Panc1 (cell line): ENCODE measurements at regions of chr1 and their contacts with region 1.

Region 1: GRCh38 chr1:147717063-147717565 is 43.3 kb downstream of the GJA5 start:
- DNase-seq: no peak
- ATAC-seq: peak; percentile 90
- H3K4me3 ChIP-seq: no peak overlapping the region
- H3K27ac ChIP-seq: no peak overlapping the region
- H3K4me1 ChIP-seq: no peaks in the 10 kb centered on the region; the same call in 1 of the 2 replicates
- H3K27me3 ChIP-seq: no peaks in the 10 kb centered on the region; the same call in 1 of the 2 replicates
- CTCF ChIP-seq: no peak

Region 2: DNA sequence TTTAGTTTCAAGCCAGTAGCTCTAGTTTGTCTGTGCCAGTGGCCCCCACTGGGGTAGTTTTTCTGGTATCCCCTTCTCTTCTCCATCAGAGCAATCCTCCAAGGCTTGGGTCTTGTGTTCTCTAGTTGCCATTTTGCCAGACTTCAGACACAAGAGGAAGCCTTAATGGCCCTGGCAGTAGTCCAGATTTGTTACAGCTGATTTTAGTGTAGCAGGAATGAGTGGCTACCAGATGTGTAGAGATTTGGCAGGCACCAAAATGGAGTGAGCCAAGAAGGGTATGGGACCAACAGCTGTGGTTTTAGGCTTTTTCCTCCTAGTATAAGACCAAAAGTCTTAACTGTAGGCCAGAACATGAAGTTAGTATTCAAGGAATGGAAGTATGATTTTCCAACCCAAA is 103.6 kb before region 1 on chr1:
- CTCF ChIA-PET with region 1: no interaction called
- POLR2A ChIA-PET with region 1: no interaction called
- in situ Hi-C with region 1: no loop called
- intact Hi-C with region 1: no loop called
- DNase-seq: no peak
- ATAC-seq: no peak
- H3K4me3 ChIP-seq: no peak overlapping the region
- H3K27ac ChIP-seq: no peak overlapping the region
- H3K4me1 ChIP-seq: no peaks in the 10 kb centered on the region
- H3K27me3 ChIP-seq: no peaks in the 10 kb centered on the region
- CTCF ChIP-seq: no peak

Region 3: GRCh38 chr1:147640553-147641165 is 76.5 kb before region 1 on chr1:
- CTCF ChIA-PET with region 1: no interaction called
- POLR2A ChIA-PET with region 1: no interaction called
- in situ Hi-C with region 1: no loop called
- intact Hi-C with region 1: no loop called
- DNase-seq: peak; percentile 32
- ATAC-seq: peak; percentile 96
- H3K4me3 ChIP-seq: no peak overlapping the region
- H3K27ac ChIP-seq: no peak overlapping the region
- H3K4me1 ChIP-seq: no peaks in the 10 kb centered on the region
- H3K27me3 ChIP-seq: no peaks in the 10 kb centered on the region
- CTCF ChIP-seq: peak; percentile 92

Region 4: DNA sequence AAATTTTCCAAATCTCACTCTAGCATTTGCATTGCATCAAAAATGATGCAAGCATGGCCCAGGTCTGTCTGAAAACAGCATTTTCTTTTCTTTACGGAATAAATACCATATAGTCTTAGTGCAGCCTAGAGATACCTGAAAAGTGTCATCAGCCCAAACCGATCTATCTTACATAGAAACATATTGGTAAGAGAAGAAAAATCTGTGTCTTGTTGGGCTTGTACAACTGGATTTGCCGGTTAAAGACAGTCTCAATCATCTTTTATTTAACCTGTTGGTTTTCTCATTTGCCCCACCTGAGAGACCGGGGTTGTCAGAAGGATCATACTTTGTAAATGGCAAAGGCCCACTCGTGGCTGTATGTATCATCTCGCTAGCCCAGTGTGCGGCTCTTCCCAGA is 62.6 kb before region 1 on chr1:
- CTCF ChIA-PET with region 1: no interaction called
- POLR2A ChIA-PET with region 1: no interaction called
- in situ Hi-C with region 1: no loop called
- intact Hi-C with region 1: no loop called
- DNase-seq: no peak
- ATAC-seq: no peak
- H3K4me3 ChIP-seq: no peak overlapping the region
- H3K27ac ChIP-seq: no peak overlapping the region
- H3K4me1 ChIP-seq: no peaks in the 10 kb centered on the region
- H3K27me3 ChIP-seq: no peaks in the 10 kb centered on the region
- CTCF ChIP-seq: no peak

Region 5: GRCh38 chr1:147700042-147701006 is 16.8 kb before region 1 on chr1:
- CTCF ChIA-PET with region 1: no interaction called
- POLR2A ChIA-PET with region 1: no interaction called
- in situ Hi-C with region 1: no loop called
- intact Hi-C with region 1: loop called (anchors 2 kb)
- DNase-seq: no peak
- ATAC-seq: peak; percentile 98
- H3K4me3 ChIP-seq: no peak overlapping the region
- H3K27ac ChIP-seq: no peak overlapping the region
- H3K4me1 ChIP-seq: no peaks in the 10 kb centered on the region
- H3K27me3 ChIP-seq: no peaks in the 10 kb centered on the region
- CTCF ChIP-seq: peak; percentile 90

Region 6: GRCh38 chr1:147771231-147772125 is 54.4 kb after region 1 on chr1:
- CTCF ChIA-PET with region 1: no interaction called
- POLR2A ChIA-PET with region 1: no interaction called
- in situ Hi-C with region 1: no loop called
- intact Hi-C with region 1: no loop called
- DNase-seq: no peak
- ATAC-seq: no peak
- H3K4me3 ChIP-seq: no peak overlapping the region
- H3K27ac ChIP-seq: no peak overlapping the region
- H3K4me1 ChIP-seq: no peaks in the 10 kb centered on the region
- H3K27me3 ChIP-seq: peaks cover 22% of the 10 kb centered on the region
- CTCF ChIP-seq: no peak